Uterus (tissue), 4 donors: ENCODE measurements at regions of chr18 and their contacts with region 1.

Region 1: GRCh38 chr18:23450022-23450421 is 3.1 kb upstream of the RIOK3 start:
- DNase-seq: no peak
- H3K4me3 ChIP-seq: no peak overlapping the region
- H3K27ac ChIP-seq: no peak overlapping the region
- H3K4me1 ChIP-seq: no peaks in the 10 kb centered on the region
- H3K27me3 ChIP-seq: no peaks in the 10 kb centered on the region
- CTCF ChIP-seq: no peak
- POLR2A ChIP-seq: no peak

Region 2: DNA sequence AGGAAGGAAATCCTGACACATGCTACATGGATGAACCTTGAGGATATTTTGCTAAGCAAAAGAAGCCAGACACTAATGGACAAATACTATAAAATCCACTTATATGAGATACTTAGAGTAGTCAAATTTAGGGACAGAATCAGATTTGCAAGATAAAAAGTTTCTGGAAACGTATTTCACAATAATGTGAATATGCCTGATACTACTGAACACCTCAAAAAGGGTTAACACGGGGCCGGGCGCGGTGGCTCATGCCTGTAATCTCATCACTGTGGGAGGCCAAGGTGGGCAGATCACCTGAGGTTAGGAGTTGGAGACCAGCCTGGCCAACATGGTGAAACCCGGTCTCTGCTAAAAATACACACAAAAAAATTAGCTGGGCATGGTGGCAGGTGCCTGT is 51.6 kb after region 1 on chr18:
- intact Hi-C with region 1: loop called (anchors 2 kb)
- DNase-seq: no peak
- H3K4me3 ChIP-seq: no peak overlapping the region
- H3K27ac ChIP-seq: no peak overlapping the region
- H3K4me1 ChIP-seq: peaks cover 0 to 4% of the 10 kb centered on the region in 2 donors
- H3K27me3 ChIP-seq: no peaks in the 10 kb centered on the region
- CTCF ChIP-seq: no peak
- POLR2A ChIP-seq: no peak

Region 3: DNA sequence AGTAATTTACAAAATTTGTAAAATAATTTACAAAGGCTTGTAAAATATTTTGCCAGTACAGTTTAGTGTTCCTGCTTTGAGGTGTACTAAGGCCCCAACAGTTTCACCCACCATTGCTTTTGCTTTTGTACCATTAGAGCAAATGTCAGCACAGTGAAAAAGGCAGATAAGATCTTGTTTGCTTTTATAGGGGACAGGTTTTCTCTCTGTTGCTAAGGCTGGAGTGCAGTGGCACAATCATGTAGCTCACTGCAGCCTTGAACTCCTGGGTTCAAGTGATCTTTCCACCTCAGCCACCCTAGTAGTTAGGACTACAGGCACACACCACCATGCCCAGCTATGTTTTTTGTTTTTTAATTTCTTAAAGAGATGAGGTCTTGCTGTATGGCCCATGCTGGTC is 155.9 kb after region 1 on chr18:
- intact Hi-C with region 1: no loop called
- DNase-seq: no peak
- H3K4me3 ChIP-seq: no peak overlapping the region
- H3K27ac ChIP-seq: no peak overlapping the region
- H3K4me1 ChIP-seq: no peaks in the 10 kb centered on the region
- H3K27me3 ChIP-seq: no peaks in the 10 kb centered on the region
- CTCF ChIP-seq: no peak
- POLR2A ChIP-seq: no peak